Psoas muscle (tissue), 8 donors: ENCODE measurements at regions of chr1 and their contacts with region 1.

Region 1: DNA sequence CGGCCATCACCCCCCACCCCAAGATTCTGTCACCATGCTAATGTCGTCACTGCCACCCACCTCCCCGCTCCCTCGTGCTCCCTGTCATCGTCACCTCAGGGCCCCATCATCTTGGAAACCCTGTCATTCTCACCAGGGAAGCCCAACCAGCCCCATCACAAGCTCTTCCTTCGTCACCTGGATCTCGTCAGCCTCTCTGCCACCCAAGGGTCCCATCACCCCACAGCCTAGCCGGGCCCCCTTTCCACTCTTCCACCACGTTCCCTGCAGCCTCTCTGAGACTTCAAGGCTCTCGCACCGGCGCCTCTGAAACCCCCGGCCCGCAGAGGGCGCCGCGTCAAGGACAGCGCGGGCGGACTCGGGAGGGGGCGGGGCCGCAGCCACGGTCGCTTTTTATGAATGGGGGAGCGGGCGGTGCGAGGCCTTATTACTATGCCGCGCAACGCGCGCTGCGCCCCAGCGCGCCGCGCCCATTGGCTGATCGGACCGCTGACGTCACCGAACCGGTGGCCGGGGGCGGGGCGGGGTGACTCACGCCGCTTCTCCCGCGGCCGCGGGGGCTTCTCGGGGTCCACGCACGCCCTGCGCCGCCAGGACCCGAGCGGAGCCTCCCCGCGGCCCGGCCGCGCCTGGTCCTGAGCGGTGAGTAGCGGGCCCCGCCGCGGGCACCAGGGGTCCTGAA is at the start of gene GPR3:
- DNase-seq: peak; percentile 93 to 95
- ATAC-seq: peak; percentile 87 to 93 (median 91)
- H3K4me3 ChIP-seq: peak within 1 kb of the TSS; percentile 67
- H3K27ac ChIP-seq: no peak within 1 kb of the TSS
- H3K4me1 ChIP-seq: peaks cover 8% of the 10 kb centered on the region
- H3K27me3 ChIP-seq: no peaks in the 10 kb centered on the region
- CTCF ChIP-seq: peak; percentile 38
- total RNA-seq, gene GPR3: 0.42 to 1.3 TPM in 2 of 4 donors, not detected in the others

Region 2: GRCh38 chr1:26900001-26900814 is 492.0 kb before region 1 on chr1 and contains the start of gene GPATCH3:
- intact Hi-C with region 1: no loop called
- DNase-seq: peak; percentile 91 to 96
- ATAC-seq: peak; percentile 92 to 99 (median 93)
- H3K4me3 ChIP-seq: peak within 1 kb of the TSS; percentile 81
- H3K27ac ChIP-seq: peak within 1 kb of the TSS; percentile 78
- H3K4me1 ChIP-seq: peaks cover 21% of the 10 kb centered on the region
- H3K27me3 ChIP-seq: no peaks in the 10 kb centered on the region
- CTCF ChIP-seq: no peak
- total RNA-seq, gene GPATCH3: 10.7 to 22.9 (median 12.1) TPM

Region 3: DNA sequence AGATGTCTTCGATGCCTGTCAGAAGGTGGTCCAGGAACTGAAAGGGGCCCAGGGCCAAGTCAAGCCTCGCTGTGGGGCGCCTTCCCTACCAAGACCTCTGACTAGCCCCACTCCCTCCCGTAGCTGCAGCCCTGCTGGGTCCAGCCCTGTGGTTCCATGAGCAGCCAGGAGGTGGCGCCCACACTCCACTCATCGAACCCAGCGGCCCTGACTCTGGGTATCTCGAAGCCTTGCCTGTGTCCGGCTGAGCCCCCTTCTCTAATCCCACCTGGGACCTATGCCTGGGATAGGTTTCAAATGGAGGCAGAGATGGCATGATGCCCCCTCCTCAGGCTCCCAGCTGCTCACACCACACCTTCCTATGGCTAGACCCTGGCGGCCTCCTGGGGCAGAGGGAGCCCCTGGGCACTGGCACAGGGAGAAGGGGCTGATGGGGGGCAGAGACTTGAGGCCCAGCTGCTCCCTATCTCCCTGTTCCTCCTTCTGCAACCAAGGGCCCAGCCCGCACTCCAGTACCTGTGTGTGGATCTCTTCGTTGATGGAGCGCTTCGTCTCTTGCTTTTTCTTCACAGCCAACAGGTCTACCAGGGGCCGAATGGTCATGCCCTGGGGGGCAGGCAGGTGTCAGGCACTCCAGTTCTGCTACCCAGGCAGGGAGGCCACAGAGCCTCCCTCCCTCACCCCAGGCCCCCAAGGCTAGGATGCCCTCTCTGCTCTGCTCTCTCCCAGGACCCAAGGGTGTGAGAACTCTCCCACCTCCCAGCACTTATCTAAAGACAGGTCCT is 289.3 kb before region 1 on chr1:
- intact Hi-C with region 1: loop called in 1 of 2 experiments (anchors 10 kb)
- DNase-seq: peak; percentile 75 to 86
- ATAC-seq: peak; percentile 78 to 90 (median 86)
- H3K4me3 ChIP-seq: no peak overlapping the region
- H3K27ac ChIP-seq: no peak overlapping the region
- H3K4me1 ChIP-seq: no peaks in the 10 kb centered on the region
- H3K27me3 ChIP-seq: no peaks in the 10 kb centered on the region
- CTCF ChIP-seq: peak; percentile 98

Region 4: GRCh38 chr1:27300341-27301051 is 91.7 kb before region 1 on chr1:
- intact Hi-C with region 1: loop called (anchors 2 kb)
- DNase-seq: peak; percentile 78 to 91
- ATAC-seq: peak; percentile 79 to 96 (median 88)
- H3K4me3 ChIP-seq: no peak overlapping the region
- H3K27ac ChIP-seq: peak overlapping the region; percentile 66
- H3K4me1 ChIP-seq: peaks cover 30% of the 10 kb centered on the region
- H3K27me3 ChIP-seq: no peaks in the 10 kb centered on the region
- CTCF ChIP-seq: peak; percentile 99

Region 5: DNA sequence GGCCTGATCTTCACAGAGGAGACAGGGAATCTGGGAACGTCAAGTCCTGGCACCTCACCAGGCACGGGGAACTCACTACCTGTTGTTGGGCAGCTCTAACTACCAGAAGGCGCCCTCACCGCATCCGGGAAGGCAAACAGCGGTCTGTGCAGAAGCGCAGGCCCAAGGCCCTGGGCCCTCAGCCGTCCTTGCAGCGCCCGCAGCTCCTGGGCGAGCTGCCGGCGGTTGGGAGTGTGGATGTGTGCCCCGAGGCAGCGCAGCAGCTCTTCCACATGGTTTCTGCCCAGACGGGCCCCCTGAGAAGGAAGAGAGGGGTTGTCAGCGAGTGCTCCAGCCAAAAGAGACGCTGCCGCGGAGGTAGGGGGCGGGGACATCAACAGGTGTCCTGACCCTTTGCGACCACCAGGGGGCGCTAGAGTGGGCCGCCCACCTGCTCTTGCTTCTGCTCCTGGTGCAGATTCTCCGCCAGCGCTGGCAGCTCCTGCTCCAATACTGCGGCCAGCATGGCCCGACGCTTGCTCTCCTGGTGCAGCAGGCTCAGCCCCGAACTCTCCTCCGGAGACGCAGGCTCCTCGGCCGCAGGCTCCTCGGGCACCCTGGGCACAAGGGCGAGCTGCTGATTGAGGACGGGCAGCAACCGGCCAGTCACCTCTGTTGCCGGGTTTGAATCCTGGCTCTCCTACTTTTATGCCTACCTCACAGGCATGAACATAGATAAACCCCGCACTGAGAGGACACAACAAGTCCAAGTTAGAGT is 34.8 kb before region 1 on chr1:
- intact Hi-C with region 1: loop called (anchors 2 kb)
- DNase-seq: peak; percentile 77 to 88
- ATAC-seq: peak; percentile 82 to 95 (median 90)
- H3K4me3 ChIP-seq: peak overlapping the region; percentile 25
- H3K27ac ChIP-seq: no peak overlapping the region
- H3K4me1 ChIP-seq: no peaks in the 10 kb centered on the region
- H3K27me3 ChIP-seq: no peaks in the 10 kb centered on the region
- CTCF ChIP-seq: peak; percentile 97

Region 6: GRCh38 chr1:27365372-27366112 is 26.7 kb before region 1 on chr1:
- intact Hi-C with region 1: loop called in 1 of 2 experiments (anchors 1 kb)
- DNase-seq: peak; percentile 89 to 93
- ATAC-seq: peak; percentile 76 to 84 (median 78)
- H3K4me3 ChIP-seq: peak overlapping the region; percentile 72
- H3K27ac ChIP-seq: peak overlapping the region; percentile 86
- H3K4me1 ChIP-seq: peaks cover 17% of the 10 kb centered on the region
- H3K27me3 ChIP-seq: no peaks in the 10 kb centered on the region
- CTCF ChIP-seq: no peak

Region 7: GRCh38 chr1:27536767-27537166 is 144.5 kb after region 1 on chr1:
- intact Hi-C with region 1: no loop called
- DNase-seq: peak in 1 of 2 donors; percentile 81
- ATAC-seq: peak; percentile 34 to 69 (median 57)
- H3K4me3 ChIP-seq: peak overlapping the region; percentile 1
- H3K27ac ChIP-seq: peak overlapping the region; percentile 95
- H3K4me1 ChIP-seq: peaks cover 61% of the 10 kb centered on the region
- H3K27me3 ChIP-seq: no peaks in the 10 kb centered on the region
- CTCF ChIP-seq: no peak

Region 8: GRCh38 chr1:27671964-27672749 is 279.9 kb after region 1 on chr1 and contains the start of gene IFI6:
- intact Hi-C with region 1: loop called in 1 of 2 experiments (anchors 5 kb)
- DNase-seq: peak; percentile 79 to 87
- ATAC-seq: peak; percentile 92 to 96 (median 94)
- H3K4me3 ChIP-seq: peak within 1 kb of the TSS; percentile 73
- H3K27ac ChIP-seq: peak within 1 kb of the TSS; percentile 77
- H3K4me1 ChIP-seq: peaks cover 13% of the 10 kb centered on the region
- H3K27me3 ChIP-seq: no peaks in the 10 kb centered on the region
- CTCF ChIP-seq: peak; percentile 36
- total RNA-seq, gene IFI6: 7.8 to 25.8 (median 15.3) TPM